Breast epithelium (tissue), 4 donors: ENCODE measurements at regions of chr2 and their contacts with region 1.

Region 1: GRCh38 chr2:218710687-218711549 is at the start of gene TTLL4:
- DNase-seq: peak; percentile 97 to 98
- H3K4me3 ChIP-seq: peak within 1 kb of the TSS; percentile 75 to 93 (median 75)
- H3K27ac ChIP-seq: peak within 1 kb of the TSS; percentile 94 to 98
- H3K4me1 ChIP-seq: peaks cover 0 to 5% of the 10 kb centered on the region in 2 donors
- H3K27me3 ChIP-seq: no peaks in the 10 kb centered on the region
- CTCF ChIP-seq: peak; percentile 84 to 98 (median 90)
- POLR2A ChIP-seq: peak; percentile 62
- total RNA-seq, gene TTLL4: 8.3 to 34.7 (median 29.0) TPM

Region 2: GRCh38 chr2:217953531-217953932 is 757.4 kb before region 1 on chr2:
- intact Hi-C with region 1: loop called (anchors 5 kb)
- DNase-seq: peak in 1 of 2 donors; percentile 49
- H3K4me3 ChIP-seq: no peak overlapping the region
- H3K27ac ChIP-seq: peak overlapping the region; percentile 65 to 89
- H3K4me1 ChIP-seq: peaks cover 17 to 50% of the 10 kb centered on the region in 2 donors
- H3K27me3 ChIP-seq: no peaks in the 10 kb centered on the region
- CTCF ChIP-seq: no peak
- POLR2A ChIP-seq: no peak

Region 3: DNA sequence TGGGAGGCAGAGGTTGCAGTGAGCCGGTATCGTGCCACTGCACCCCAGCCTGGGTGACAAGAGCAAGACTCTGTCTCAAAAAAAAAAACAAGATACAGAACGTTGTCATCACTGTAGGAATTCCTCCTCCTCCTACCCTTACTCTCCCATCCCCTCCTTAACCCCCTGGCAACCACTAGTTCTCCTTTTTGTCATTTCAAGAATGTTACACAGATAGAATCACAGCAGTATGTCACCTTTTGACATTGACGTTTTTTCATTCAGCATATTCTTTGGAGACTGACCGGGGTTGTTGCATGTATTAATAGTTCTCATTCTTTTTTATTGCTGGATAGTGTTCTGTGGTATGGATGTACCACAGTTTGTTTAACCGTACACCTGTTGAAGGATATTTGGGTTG is 32.1 kb after region 1 on chr2:
- intact Hi-C with region 1: loop called (anchors 1 kb)
- DNase-seq: no peak
- H3K4me3 ChIP-seq: no peak overlapping the region
- H3K27ac ChIP-seq: no peak overlapping the region
- H3K4me1 ChIP-seq: no peaks in the 10 kb centered on the region
- H3K27me3 ChIP-seq: no peaks in the 10 kb centered on the region
- CTCF ChIP-seq: no peak
- POLR2A ChIP-seq: no peak

Region 4: GRCh38 chr2:218832520-218832919 is 121.6 kb after region 1 on chr2:
- intact Hi-C with region 1: loop called (anchors 10 kb)
- DNase-seq: no peak
- H3K4me3 ChIP-seq: no peak overlapping the region
- H3K27ac ChIP-seq: peak overlapping the region in 1 of 2 donors; percentile 32
- H3K4me1 ChIP-seq: no peaks in the 10 kb centered on the region
- H3K27me3 ChIP-seq: no peaks in the 10 kb centered on the region
- CTCF ChIP-seq: no peak
- POLR2A ChIP-seq: no peak

Region 5: GRCh38 chr2:218852911-218853667 is 142.2 kb after region 1 on chr2:
- intact Hi-C with region 1: loop called (anchors 10 kb)
- DNase-seq: peak; percentile 38 to 62
- H3K4me3 ChIP-seq: no peak overlapping the region
- H3K27ac ChIP-seq: no peak overlapping the region
- H3K4me1 ChIP-seq: no peaks in the 10 kb centered on the region
- H3K27me3 ChIP-seq: peaks cover 0 to 6% of the 10 kb centered on the region in 2 donors
- CTCF ChIP-seq: peak; percentile 59 to 80 (median 67)
- POLR2A ChIP-seq: no peak

Region 6: GRCh38 chr2:219278655-219279516 is 568.0 kb after region 1 on chr2 and contains the start of gene DNAJB2:
- intact Hi-C with region 1: no loop called
- DNase-seq: peak; percentile 98
- H3K4me3 ChIP-seq: peak within 1 kb of the TSS; percentile 72 to 87 (median 84)
- H3K27ac ChIP-seq: peak within 1 kb of the TSS; percentile 98
- H3K4me1 ChIP-seq: peaks cover 13 to 16% of the 10 kb centered on the region in 2 donors
- H3K27me3 ChIP-seq: no peaks in the 10 kb centered on the region
- CTCF ChIP-seq: no peak
- POLR2A ChIP-seq: peak; percentile 70
- total RNA-seq, gene DNAJB2: 49.9 to 88.3 (median 59.0) TPM